Gastrocnemius medialis (tissue), 4 donors: ENCODE measurements at regions of chr12 and their contacts with region 1.

Region 1: GRCh38 chr12:793711-794110 is 41.3 kb downstream of the WNK1 start:
- DNase-seq: no peak
- ATAC-seq: no peak
- H3K4me3 ChIP-seq: no peak overlapping the region
- H3K27ac ChIP-seq: no peak overlapping the region
- H3K4me1 ChIP-seq: peaks cover 51 to 62% of the 10 kb centered on the region in 2 donors
- H3K27me3 ChIP-seq: no peaks in the 10 kb centered on the region
- CTCF ChIP-seq: no peak
- POLR2A ChIP-seq: no peak

Region 2: GRCh38 chr12:759628-760027 is 34.1 kb before region 1 on chr12:
- in situ Hi-C with region 1: no loop called
- intact Hi-C with region 1: loop called (anchors 1 kb)
- DNase-seq: no peak
- ATAC-seq: no peak
- H3K4me3 ChIP-seq: no peak overlapping the region
- H3K27ac ChIP-seq: no peak overlapping the region
- H3K4me1 ChIP-seq: peaks cover 24 to 69% of the 10 kb centered on the region in 2 donors
- H3K27me3 ChIP-seq: no peaks in the 10 kb centered on the region
- CTCF ChIP-seq: no peak
- POLR2A ChIP-seq: no peak